ENCODE measurements at regions of chr10 and their contacts with region 1.

Region 1: GRCh38 chr10:70158113-70158512 is 11.6 kb upstream of the TYSND1 start:
- DNase-seq: no peak
- ATAC-seq: no peak
- H3K4me3 ChIP-seq: no peak overlapping the region
- H3K27ac ChIP-seq: no peak overlapping the region
- H3K4me1 ChIP-seq: peaks cover 4% of the 10 kb centered on the region; the same call in 1 of the 2 replicates
- H3K27me3 ChIP-seq: no peaks in the 10 kb centered on the region
- CTCF ChIP-seq: no peak
- POLR2A ChIP-seq: no peak
- RAD21 ChIP-seq: no peak

Region 2: DNA sequence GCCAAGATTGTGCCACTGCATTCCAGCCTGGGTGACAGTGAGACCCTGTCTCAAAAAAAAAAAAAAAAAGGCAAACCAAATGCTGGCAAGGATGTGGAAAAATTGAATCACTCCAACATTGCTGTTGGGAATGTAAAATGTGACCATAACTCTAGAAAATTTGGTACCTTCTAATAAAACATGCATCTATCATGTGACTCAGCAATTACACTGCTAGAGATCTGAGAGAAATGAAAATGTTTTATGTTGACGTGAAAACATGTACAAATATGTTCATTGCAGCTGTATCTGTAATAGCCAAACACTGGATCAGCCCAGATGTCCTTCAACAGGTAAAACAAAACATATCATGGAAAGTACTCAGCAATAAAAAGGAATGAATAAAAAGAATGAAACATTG is 43.0 kb after region 1 on chr10:
- CTCF ChIA-PET with region 1: no interaction called
- POLR2A ChIA-PET with region 1: no interaction called
- dilution Hi-C with region 1: no loop called
- in situ Hi-C with region 1: no loop called
- intact Hi-C with region 1: loop called (anchors 10 kb)
- DNase-seq: no peak
- ATAC-seq: no peak
- H3K4me3 ChIP-seq: no peak overlapping the region
- H3K27ac ChIP-seq: no peak overlapping the region
- H3K4me1 ChIP-seq: no peaks in the 10 kb centered on the region
- H3K27me3 ChIP-seq: no peaks in the 10 kb centered on the region
- CTCF ChIP-seq: no peak
- POLR2A ChIP-seq: no peak
- RAD21 ChIP-seq: no peak

Region 3: GRCh38 chr10:70605161-70605560 is 447.0 kb after region 1 on chr10:
- CTCF ChIA-PET with region 1: no interaction called
- POLR2A ChIA-PET with region 1: no interaction called
- dilution Hi-C with region 1: no loop called
- in situ Hi-C with region 1: no loop called
- intact Hi-C with region 1: no loop called
- DNase-seq: no peak
- ATAC-seq: no peak
- H3K4me3 ChIP-seq: no peak overlapping the region
- H3K27ac ChIP-seq: no peak overlapping the region
- H3K4me1 ChIP-seq: no peaks in the 10 kb centered on the region
- H3K27me3 ChIP-seq: peaks cover 19% of the 10 kb centered on the region
- CTCF ChIP-seq: no peak
- POLR2A ChIP-seq: no peak
- RAD21 ChIP-seq: no peak